Activated T-helper 2 cell treated with anti-CD3 and anti-CD28 coated beads, Interferon-gamma antibody, Interleukin-2, Interleukin-4, amounts not matched to agents 10 μg/mL and 5 μg/mL and 100 μg/mL, durations not matched to agents 14 hours and 24 hours and 36 hours (primary cell): ENCODE measurements at regions of chr10 and their contacts with region 1.

Region 1: DNA sequence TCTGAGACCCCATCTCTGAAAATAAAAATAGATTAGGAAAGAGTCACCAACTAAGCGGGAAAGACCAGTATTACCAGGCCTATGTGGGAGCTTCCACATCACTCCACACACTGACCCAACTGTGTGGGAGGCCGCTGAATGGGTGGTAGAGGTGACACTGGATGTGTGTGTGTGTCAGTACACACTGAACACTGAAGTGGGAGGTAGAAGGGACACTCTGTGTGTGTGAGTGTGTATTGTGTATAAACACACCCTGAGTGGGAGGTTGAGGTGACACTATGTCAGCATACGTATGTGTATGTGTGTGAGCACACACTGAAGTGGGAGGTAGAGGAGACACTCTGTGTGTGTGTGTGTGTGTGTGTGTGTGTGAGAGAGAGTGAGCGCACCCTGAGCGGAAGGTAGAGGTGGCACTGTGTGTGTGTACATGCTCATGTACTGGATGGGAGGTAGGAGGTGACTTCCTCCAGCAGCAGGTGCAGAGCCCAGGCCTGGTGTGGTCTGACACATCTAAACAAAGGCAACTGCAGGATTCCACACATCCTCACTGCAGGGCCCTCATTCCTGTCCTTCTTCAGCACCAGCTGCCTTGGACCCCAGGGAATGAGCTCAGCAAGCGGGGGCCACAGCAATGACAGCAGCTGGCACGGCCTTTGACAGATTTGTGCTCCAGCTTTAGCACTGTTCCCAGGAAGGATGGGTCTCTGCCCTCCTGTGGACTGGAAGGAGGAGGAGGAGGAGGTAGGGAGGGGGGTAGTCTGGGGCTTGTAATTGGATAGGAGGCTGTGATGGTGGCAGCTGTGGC is 26.5 kb upstream of the RBM20 start:
- DNase-seq: no peak
- H3K4me3 Mint-ChIP-seq: no peak overlapping the region
- H3K27ac Mint-ChIP-seq: peak overlapping the region; percentile 77
- H3K4me1 Mint-ChIP-seq: peaks cover 42% of the 10 kb centered on the region
- H3K27me3 Mint-ChIP-seq: no peaks in the 10 kb centered on the region

Region 2: GRCh38 chr10:110643653-110644597 is 26.3 kb after region 1 on chr10 and contains the start of gene RBM20:
- intact Hi-C with region 1: loop called (anchors 2 kb)
- DNase-seq: no peak
- H3K4me3 Mint-ChIP-seq: peak within 1 kb of the TSS; percentile 75
- H3K27ac Mint-ChIP-seq: no peak within 1 kb of the TSS
- H3K4me1 Mint-ChIP-seq: peaks cover 23% of the 10 kb centered on the region
- H3K27me3 Mint-ChIP-seq: peaks cover 67% of the 10 kb centered on the region
- total RNA-seq, gene RBM20: 0.02 TPM in 1 of 2 replicates, not detected in the other